Esophagus muscularis mucosa (tissue), 4 donors: ENCODE measurements at regions of chr9 and their contacts with region 1.

Region 1: DNA sequence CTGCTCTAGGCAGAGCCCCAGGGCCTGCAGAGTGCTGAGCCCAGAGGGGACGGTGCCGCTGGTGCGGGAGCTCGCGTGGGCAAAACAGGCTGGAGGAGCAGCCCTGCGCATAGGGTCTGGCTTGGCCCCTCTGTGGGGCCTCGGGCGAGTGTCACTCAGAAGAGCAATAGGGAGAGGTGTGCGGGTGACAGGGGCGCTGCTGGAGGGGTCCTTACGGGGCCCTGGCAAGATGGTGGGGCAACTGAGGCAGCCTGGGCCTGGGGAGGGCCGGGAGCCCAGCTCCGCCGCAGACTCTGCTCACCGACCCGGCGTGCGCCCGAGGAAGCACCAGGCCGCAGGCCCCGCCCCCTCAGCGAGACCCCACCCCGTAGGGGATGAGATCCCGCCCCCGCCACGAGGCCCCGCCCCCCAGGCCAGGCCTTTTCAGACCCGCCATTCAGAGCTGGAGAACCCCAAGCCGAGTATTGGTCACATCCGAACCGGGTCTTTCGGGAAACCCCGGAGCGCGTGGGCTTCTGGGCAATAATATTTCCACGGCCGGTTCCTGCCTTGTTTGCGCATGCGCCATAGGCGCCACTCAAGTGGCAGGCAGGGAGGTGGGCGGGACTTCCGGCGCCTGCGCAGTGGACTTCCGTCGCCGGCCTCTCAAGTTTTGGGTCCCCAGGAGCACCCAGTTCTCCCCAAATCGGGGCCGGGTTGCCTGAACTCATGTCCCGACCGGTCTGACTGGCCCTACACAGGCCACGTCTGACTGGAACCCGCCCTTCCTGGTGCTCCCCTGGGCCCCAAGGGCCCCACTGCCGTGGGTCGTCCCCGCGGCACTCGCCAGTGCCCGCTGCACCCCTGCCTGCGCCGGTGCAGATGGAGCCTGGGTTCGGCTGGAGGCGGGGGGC is 1.3 kb upstream of the RNF208 start:
- DNase-seq: peak; percentile 100
- H3K4me3 ChIP-seq: peak overlapping the region; percentile 72 to 87 (median 80)
- H3K27ac ChIP-seq: peak overlapping the region; percentile 91 to 94 (median 92)
- H3K4me1 ChIP-seq: peaks cover 28 to 47% (median 36%) of the 10 kb centered on the region in 4 donors
- H3K27me3 ChIP-seq: peaks cover 0 to 19% (median 6%) of the 10 kb centered on the region in 4 donors
- CTCF ChIP-seq: peak in 1 of 3 experiments; percentile 24
- EP300 ChIP-seq: no peak
- POLR2A ChIP-seq: peak; percentile 39

Region 2: DNA sequence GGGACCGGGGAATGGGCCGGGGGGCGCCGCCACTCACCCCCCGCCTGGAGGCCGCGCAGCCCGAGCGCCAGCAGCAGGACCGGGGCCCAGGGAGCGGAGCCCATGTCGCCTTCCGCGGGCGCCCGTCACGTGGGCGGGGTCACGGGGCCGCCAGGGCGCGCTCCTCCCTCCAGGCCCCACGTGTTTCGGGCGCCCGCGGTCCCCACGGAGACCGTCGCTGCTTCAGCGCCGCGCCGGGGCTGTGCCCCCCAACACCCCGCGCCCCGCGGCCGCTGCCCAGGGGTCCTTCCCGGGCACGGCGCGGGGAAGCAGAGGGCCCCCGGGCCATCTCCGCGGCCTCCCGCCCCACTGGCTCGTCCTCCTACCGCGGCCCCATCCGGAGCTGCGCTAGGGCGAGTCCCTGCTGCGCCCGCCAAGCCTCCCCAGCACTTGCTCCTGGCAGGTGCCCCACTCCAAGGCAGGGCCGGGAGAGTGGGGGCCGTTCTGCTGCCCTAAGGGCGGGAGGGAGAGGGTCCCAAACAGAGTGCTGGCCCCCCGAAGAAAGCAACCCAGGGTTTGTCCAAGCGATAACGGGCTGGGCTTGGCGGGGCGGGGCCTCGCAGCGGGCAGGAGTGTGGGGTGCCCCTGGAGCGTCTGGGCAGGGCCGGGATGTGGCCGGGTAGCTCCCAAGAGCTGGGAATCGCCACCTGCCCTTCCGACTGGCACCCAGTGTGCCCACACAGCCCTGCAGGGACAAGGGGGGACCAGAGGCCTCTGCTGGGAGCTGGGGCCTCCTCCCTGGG is 108.5 kb before region 1 on chr9 and contains the start of gene DPP7:
- intact Hi-C with region 1: loop called (anchors 2 kb)
- DNase-seq: no peak
- H3K4me3 ChIP-seq: peak within 1 kb of the TSS; percentile 73 to 93 (median 84)
- H3K27ac ChIP-seq: peak within 1 kb of the TSS; percentile 36 to 68 (median 52)
- H3K4me1 ChIP-seq: peaks cover 16 to 26% (median 20%) of the 10 kb centered on the region in 4 donors
- H3K27me3 ChIP-seq: no peaks in the 10 kb centered on the region
- CTCF ChIP-seq: peak in 1 of 3 experiments; percentile 12
- EP300 ChIP-seq: no peak
- POLR2A ChIP-seq: no peak
- total RNA-seq, gene DPP7: 90.1 to 121 (median 104) TPM

Region 3: GRCh38 chr9:137188490-137189296 is 34.6 kb before region 1 on chr9 and contains the starts of genes ANAPC2 and SSNA1:
- intact Hi-C with region 1: loop called (anchors 5 kb)
- DNase-seq: peak; percentile 96
- H3K4me3 ChIP-seq: peak within 1 kb of the TSS; percentile 90 to 98 (median 94)
- H3K27ac ChIP-seq: peak within 1 kb of the TSS; percentile 94 to 99 (median 98)
- H3K4me1 ChIP-seq: peaks cover 45 to 77% (median 54%) of the 10 kb centered on the region in 4 donors
- H3K27me3 ChIP-seq: no peaks in the 10 kb centered on the region
- CTCF ChIP-seq: peak; percentile 12 to 62 (median 29)
- EP300 ChIP-seq: no peak
- POLR2A ChIP-seq: peak; percentile 85
- total RNA-seq, gene ANAPC2: 18.7 to 28.7 (median 25.1) TPM
- total RNA-seq, gene SSNA1: 58.2 to 99.5 (median 76.7) TPM

Region 4: DNA sequence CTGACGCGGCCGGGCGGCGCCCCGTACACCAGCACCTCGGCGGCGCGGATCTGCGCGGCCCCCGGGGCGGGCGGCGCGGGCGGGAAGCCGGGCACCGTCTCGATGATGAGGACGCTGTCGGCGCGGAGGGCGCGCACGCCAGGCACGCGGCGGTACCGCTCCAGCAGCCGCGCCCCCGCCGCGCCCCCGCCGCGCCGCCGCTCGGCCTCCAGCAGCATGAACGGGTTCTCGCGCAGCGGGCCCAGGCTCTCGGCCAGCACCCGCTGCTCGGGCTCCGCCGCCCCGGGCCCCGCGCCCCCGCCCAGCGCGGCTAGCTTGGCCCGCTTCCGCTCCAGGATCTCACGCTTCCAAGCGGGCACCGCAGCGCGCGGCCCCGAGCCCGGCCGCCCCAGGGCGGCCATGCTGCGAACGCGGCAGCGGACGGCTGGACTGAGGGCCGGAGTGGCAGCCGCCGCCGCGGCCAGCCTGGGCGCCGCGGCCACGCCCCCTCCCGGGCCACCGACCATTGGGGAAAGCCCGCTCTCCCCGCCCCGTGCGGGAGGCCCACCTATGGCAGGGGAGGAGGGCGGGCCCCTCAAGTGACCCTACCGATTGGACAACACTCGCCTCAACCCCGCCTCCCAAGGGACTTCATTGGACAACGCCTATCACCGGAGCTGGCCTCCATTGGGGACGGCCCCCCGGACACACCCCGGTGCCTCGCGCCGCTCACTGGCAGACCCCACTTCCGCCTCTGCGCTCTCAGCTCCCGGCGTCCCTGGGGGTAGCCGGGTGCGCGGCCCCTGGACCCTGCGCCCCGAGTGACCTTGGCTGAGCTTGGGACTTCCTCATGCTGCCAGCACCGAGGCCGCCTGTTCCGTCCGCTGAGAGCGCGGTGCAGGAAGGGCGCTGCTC is 22.8 kb before region 1 on chr9 and contains the start of gene TPRN:
- intact Hi-C with region 1: loop called (anchors 2 kb)
- DNase-seq: peak; percentile 100
- H3K4me3 ChIP-seq: peak within 1 kb of the TSS; percentile 70 to 76 (median 74)
- H3K27ac ChIP-seq: peak within 1 kb of the TSS; percentile 79 to 86 (median 84)
- H3K4me1 ChIP-seq: peaks cover 72 to 85% (median 74%) of the 10 kb centered on the region in 4 donors
- H3K27me3 ChIP-seq: no peaks in the 10 kb centered on the region
- CTCF ChIP-seq: peak in 1 of 3 experiments; percentile 18
- EP300 ChIP-seq: no peak
- POLR2A ChIP-seq: peak; percentile 62
- total RNA-seq, gene TPRN: 4.1 to 12.6 (median 7.7) TPM

Region 5: DNA sequence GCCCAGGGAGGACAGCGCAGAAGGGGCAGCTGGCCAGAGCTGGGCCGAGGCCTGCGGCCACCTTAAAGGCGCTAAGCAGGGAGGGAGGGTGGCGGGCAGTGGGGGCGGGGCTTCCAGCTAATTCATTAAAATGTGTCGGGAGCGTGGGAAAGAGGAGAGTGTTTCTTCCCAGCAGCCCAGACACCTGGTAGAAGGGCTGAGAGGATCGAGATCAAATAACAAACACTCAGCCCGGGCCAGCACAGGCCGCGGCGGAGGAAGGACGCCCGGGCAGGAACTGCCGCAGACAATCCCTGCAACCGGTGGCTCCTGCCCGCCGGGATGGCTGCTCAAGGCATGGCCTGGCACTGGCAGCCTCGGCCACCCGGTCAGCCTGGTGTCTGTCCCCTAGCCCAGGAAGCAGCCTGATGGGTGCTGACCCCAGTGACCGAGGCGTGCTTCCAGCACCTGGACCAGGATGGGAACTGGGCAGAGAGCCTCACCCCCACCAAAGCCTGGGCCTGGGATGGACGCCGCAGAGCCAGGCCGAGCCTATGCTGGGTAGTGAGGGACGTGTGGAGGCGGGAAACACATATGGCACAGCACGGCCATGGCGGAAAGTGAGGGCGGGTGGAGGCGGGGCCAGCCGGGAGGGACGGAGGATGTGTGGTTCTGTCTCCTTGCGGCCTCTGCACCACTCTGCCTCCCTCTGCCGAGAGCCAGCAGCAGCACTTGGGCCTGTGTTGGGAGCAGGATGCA is 81.9 kb after region 1 on chr9:
- intact Hi-C with region 1: no loop called
- DNase-seq: no peak
- H3K4me3 ChIP-seq: peak overlapping the region; percentile 34 to 44 (median 37)
- H3K27ac ChIP-seq: peak overlapping the region; percentile 56 to 81 (median 66)
- H3K4me1 ChIP-seq: peaks cover 59 to 72% (median 70%) of the 10 kb centered on the region in 4 donors
- H3K27me3 ChIP-seq: peaks cover 0 to 91% (median 16%) of the 10 kb centered on the region in 4 donors
- CTCF ChIP-seq: peak in 1 of 3 experiments; percentile 26
- EP300 ChIP-seq: no peak
- POLR2A ChIP-seq: no peak